Naive thymus-derived CD4-positive, alpha-beta T cell (primary cell): ENCODE measurements at regions of chr6 and their contacts with region 1.

Region 1: GRCh38 chr6:106223300-106223930 is 102.1 kb downstream of the ATG5 start:
- DNase-seq: peak; percentile 18 to 76 (median 65)
- ATAC-seq: peak; percentile 91
- H3K4me3 ChIP-seq: no peak overlapping the region
- H3K4me3 Mint-ChIP-seq: no peak overlapping the region
- H3K27ac ChIP-seq: no peak overlapping the region
- H3K27ac Mint-ChIP-seq: peak overlapping the region in 2 of 9 donors; percentile 5 to 61
- H3K4me1 ChIP-seq: no peaks in the 10 kb centered on the region
- H3K4me1 Mint-ChIP-seq: peaks cover 9 to 25% (median 17%) of the 10 kb centered on the region in 7 donors
- H3K27me3 ChIP-seq: no peaks in the 10 kb centered on the region
- H3K27me3 Mint-ChIP-seq: no peaks in the 10 kb centered on the region

Region 2: DNA sequence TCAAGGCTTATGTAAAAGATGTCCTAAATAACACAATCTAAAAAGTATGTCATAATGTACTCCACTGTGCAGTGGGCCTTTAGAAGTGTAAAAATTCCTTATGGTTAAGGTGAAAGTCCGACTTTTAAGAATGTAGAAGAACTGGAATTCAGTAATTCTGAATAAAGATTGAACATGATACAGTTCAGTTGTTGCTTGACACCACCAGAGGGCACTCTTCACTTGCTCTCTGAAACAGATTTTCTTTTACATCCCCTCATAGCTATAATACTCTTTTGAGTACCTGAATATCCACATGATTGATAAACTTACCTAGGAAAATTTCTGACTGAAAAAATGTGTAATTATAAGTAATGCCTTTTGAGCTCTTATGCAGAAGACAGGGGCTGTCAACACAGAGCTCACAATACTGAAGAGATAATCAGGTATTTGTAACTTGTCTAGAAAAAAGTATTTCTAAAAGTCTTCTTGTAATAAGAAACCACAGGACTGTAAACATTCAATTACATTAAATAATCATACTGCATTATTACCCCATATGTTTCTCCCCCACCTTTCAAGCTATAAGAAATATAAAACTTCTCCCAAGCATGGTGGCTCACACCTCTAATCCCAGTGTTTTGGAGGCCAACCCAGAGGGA is 1135.7 kb before region 1 on chr6:
- CTCF ChIA-PET with region 1: interaction called, 3 read pairs
- POLR2A ChIA-PET with region 1: interaction called, 3 read pairs
- intact Hi-C with region 1: loop called in 1 of 2 experiments (anchors 1 kb)
- DNase-seq: peak in 6 of 9 donors; percentile 11 to 43 (median 32)
- ATAC-seq: peak; percentile 67
- H3K4me3 ChIP-seq: no peak overlapping the region
- H3K4me3 Mint-ChIP-seq: no peak overlapping the region
- H3K27ac ChIP-seq: no peak overlapping the region
- H3K27ac Mint-ChIP-seq: no peak overlapping the region
- H3K4me1 ChIP-seq: no peaks in the 10 kb centered on the region
- H3K4me1 Mint-ChIP-seq: no peaks in the 10 kb centered on the region
- H3K27me3 ChIP-seq: no peaks in the 10 kb centered on the region
- H3K27me3 Mint-ChIP-seq: peaks cover 4 to 10% (median 6%) of the 10 kb centered on the region in 5 donors

Region 3: DNA sequence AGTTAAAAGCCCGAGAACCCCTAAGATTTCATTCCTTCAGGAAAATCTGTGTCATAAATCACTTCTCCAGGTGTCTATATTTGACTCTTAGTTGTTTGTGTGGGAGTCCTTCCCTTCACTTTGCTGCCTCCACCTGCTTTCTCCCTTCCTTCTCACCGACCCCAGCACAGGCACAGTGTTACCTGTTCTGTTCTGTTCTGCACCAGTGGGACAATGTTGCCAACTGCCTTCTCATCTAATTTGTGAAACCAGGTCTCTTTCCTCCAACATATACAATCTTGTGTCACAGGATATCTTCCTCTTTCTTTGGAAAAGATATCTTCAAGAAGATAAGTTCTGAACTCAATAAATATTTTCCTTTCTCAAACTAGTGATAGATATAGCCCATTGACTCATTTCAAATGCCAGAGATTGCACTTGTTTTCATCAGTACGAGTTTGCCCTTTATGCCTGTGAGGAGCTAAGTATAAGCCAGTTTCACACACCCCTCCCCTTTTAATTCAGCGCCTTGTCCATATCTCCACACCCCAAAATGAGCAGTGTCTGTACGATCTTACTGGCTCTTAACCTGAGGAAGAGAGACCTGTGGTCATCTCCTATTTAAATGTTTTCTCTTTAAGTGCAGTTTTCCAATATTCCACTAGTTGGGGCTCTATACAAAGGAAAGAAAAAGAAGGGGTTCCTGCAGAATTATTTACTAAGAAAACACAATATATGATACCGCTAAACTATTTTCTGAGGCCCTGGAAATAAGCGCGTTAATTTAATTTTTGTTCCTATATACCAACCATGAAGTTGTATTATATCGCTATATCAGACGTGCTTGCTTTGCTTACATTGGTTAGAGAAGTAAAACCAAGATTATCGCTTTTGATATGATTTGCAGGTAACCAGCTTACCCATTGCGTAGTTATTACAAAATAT is 738.9 kb before region 1 on chr6:
- CTCF ChIA-PET with region 1: interaction called, 5 read pairs
- POLR2A ChIA-PET with region 1: no interaction called
- intact Hi-C with region 1: loop called in 1 of 2 experiments (anchors 1 kb)
- DNase-seq: peak in 5 of 9 donors; percentile 7 to 36 (median 20)
- ATAC-seq: peak; percentile 59
- H3K4me3 ChIP-seq: no peak overlapping the region
- H3K4me3 Mint-ChIP-seq: no peak overlapping the region
- H3K27ac ChIP-seq: no peak overlapping the region
- H3K27ac Mint-ChIP-seq: peak overlapping the region in 2 of 9 donors; percentile 20 to 52
- H3K4me1 ChIP-seq: peaks cover 0 to 35% of the 10 kb centered on the region in 2 donors
- H3K4me1 Mint-ChIP-seq: peaks cover 0 to 63% (median 0%) of the 10 kb centered on the region in 7 donors
- H3K27me3 ChIP-seq: no peaks in the 10 kb centered on the region
- H3K27me3 Mint-ChIP-seq: peaks cover 11 to 16% (median 13%) of the 10 kb centered on the region in 5 donors

Region 4: DNA sequence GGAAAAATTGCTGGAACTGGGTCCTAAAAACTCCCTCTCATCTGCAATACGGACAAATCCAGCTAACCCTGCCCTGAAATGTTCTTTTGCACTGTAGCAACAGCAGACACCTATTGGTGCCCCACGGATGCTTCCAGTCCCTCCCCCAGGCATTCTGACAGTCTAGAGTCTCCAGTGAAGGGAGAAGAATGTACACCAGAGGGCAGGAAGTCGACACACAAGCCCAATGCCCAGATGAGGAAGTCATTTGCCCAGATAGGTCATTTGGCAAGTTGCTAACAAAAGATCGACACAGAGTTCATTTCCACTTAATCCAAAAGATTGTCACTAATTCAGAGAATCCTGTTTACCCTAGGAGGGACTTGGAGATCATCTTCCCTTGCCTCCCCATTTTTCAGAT is 430.3 kb before region 1 on chr6:
- CTCF ChIA-PET with region 1: interaction called, 3 read pairs
- POLR2A ChIA-PET with region 1: no interaction called
- intact Hi-C with region 1: loop called in 1 of 2 experiments (anchors 1 kb)
- DNase-seq: peak in 3 of 9 donors; percentile 9 to 23 (median 15)
- ATAC-seq: peak; percentile 76
- H3K4me3 ChIP-seq: no peak overlapping the region
- H3K4me3 Mint-ChIP-seq: peak overlapping the region in 1 of 10 donors; percentile 28
- H3K27ac ChIP-seq: no peak overlapping the region
- H3K27ac Mint-ChIP-seq: peak overlapping the region in 1 of 9 donors; percentile 68
- H3K4me1 ChIP-seq: peaks cover 0 to 3% of the 10 kb centered on the region in 2 donors
- H3K4me1 Mint-ChIP-seq: peaks cover 6 to 79% (median 12%) of the 10 kb centered on the region in 7 donors
- H3K27me3 ChIP-seq: no peaks in the 10 kb centered on the region
- H3K27me3 Mint-ChIP-seq: peaks cover 0 to under 1% (median 0%) of the 10 kb centered on the region in 5 donors

Region 5: DNA sequence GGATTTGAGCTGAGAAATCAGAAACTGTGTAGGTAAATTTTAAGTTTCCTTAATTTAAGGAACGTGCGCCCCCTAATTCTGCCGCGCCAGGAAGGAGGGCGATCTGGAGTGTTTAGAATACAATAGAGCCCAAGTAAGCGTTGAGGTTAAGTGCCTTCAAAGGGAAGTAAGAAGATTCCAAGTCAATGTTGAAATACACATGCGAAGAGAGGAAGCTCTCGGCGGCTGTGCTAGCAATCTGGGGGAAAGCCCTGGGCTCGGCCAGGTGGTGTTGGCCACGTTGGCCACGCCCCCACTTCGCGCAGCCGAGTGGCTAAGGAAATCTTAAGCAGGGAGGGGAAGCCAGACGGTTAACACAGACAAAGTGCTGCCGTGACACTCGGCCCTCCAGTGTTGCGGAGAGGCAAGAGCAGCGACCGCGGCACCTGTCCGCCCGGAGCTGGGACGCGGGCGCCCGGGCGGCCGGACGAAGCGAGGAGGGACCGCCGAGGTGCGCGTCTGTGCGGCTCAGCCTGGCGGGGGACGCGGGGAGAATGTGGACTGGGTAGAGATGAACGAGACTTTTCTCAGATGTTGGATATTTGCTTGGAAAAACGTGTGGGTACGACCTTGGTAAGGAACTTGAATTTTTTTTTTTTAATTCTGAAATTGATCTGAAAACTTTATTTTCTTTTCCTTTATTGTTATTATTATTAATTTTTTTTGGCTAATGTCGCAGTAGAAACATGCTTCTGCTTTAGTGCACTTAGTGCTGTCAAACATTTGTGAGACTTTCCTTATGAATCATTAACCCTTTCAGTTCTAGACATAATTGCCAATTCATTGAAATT is 137.2 kb before region 1 on chr6 and contains the start of gene PRDM1:
- CTCF ChIA-PET with region 1: interaction called, 21 read pairs
- POLR2A ChIA-PET with region 1: interaction called, 4 read pairs
- intact Hi-C with region 1: loop called in 1 of 2 experiments (anchors 1 kb)
- DNase-seq: peak; percentile 33 to 79 (median 53)
- ATAC-seq: peak; percentile 92
- H3K4me3 ChIP-seq: peak within 1 kb of the TSS; percentile 63
- H3K4me3 Mint-ChIP-seq: peak within 1 kb of the TSS; percentile 84 to 96 (median 90)
- H3K27ac ChIP-seq: no peak within 1 kb of the TSS
- H3K27ac Mint-ChIP-seq: peak within 1 kb of the TSS; percentile 37 to 92 (median 78)
- H3K4me1 ChIP-seq: peaks cover 50 to 60% of the 10 kb centered on the region in 2 donors
- H3K4me1 Mint-ChIP-seq: peaks cover 50 to 89% (median 76%) of the 10 kb centered on the region in 7 donors
- H3K27me3 ChIP-seq: peaks cover 0 to 14% of the 10 kb centered on the region in 2 donors
- H3K27me3 Mint-ChIP-seq: peaks cover 10 to 47% (median 18%) of the 10 kb centered on the region in 5 donors
- total RNA-seq, gene PRDM1: 2.0 to 64.1 (median 22.6) TPM

Region 6: DNA sequence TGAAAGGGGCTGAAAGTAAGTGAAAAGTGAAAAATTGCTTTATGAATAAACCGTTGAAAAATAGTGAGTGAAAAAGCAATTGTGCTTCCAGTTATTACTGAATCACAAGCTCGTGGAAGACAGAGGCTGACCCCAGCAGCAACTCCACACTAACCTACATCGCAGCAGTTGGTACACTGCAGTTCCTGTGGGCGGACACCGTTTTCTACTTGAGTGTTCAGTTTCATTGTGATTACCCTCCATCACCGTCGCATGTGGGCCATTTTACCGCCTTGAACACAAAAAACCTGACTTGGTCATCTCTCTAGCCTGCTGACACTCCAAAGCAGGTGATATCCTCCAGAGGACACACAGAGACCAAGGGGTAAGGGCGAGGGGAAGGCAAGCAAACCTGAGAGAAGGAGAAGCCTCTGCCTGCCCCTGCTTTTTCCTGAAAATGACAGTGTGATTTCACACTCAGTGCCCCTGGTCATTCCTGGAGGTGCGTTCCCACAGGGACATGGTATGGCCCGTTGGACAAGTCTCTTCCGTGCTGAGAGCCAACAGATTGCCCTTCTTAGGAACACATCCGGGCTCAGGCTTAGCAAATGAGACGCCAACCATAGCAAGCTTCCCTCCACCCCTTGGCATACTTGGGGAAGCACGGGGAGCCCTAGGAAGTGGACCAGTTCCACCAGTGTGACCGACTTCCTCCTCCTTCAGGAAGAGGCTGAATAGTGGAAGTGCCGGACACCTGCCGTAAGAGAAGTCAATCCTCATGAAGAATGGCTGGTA is 108.7 kb before region 1 on chr6:
- CTCF ChIA-PET with region 1: no interaction called
- POLR2A ChIA-PET with region 1: no interaction called
- intact Hi-C with region 1: loop called in 1 of 2 experiments (anchors 1 kb)
- DNase-seq: peak in 1 of 9 donors; percentile 64
- ATAC-seq: no peak
- H3K4me3 ChIP-seq: peak overlapping the region; percentile 28
- H3K4me3 Mint-ChIP-seq: peak overlapping the region in 3 of 10 donors; percentile 11 to 52 (median 15)
- H3K27ac ChIP-seq: no peak overlapping the region
- H3K27ac Mint-ChIP-seq: peak overlapping the region in 2 of 9 donors; percentile 47 to 59
- H3K4me1 ChIP-seq: peaks cover 39 to 78% of the 10 kb centered on the region in 2 donors
- H3K4me1 Mint-ChIP-seq: peaks cover 39 to 84% (median 61%) of the 10 kb centered on the region in 7 donors
- H3K27me3 ChIP-seq: no peaks in the 10 kb centered on the region
- H3K27me3 Mint-ChIP-seq: peaks cover 0 to 5% (median 0%) of the 10 kb centered on the region in 5 donors

Region 7: DNA sequence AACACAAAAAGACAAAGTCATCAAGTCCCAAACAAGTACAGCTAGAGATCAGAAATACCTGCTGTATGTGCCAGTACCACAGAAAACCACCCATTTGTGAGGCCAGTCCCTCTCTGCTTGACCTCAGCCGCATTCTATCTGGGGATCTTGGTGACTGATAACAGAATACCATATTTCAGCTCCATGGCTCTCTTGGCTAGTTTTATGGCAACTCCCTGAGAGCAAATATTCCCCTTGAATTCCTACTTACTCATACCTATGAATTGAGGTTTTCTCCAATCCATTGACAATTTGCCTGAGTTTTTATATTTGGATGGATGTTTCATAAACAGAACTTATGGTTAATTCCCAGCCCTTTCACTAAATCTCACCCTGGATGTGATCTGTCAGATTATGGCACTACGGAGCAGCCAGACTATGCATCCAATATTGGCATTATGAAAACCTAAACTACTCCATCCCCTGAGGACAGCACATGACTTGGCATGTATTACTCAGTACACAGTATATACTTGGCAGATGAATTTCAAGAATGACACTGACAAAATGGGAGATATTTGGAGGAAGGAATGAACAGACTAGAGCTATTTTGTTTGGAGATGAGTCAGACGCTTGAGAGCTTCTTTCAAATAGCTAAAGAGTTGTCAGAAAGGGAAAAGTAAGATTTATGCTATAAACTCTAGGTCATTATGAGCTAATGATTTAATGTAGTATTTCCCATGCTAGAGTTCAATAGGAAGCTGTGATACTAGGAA is 41.6 kb before region 1 on chr6:
- CTCF ChIA-PET with region 1: no interaction called
- POLR2A ChIA-PET with region 1: no interaction called
- intact Hi-C with region 1: loop called in 1 of 2 experiments (anchors 5 kb)
- DNase-seq: no peak
- ATAC-seq: no peak
- H3K4me3 ChIP-seq: no peak overlapping the region
- H3K4me3 Mint-ChIP-seq: no peak overlapping the region
- H3K27ac ChIP-seq: no peak overlapping the region
- H3K27ac Mint-ChIP-seq: peak overlapping the region in 1 of 9 donors; percentile 10
- H3K4me1 ChIP-seq: peaks cover 30 to 33% of the 10 kb centered on the region in 2 donors
- H3K4me1 Mint-ChIP-seq: peaks cover 3 to 47% (median 12%) of the 10 kb centered on the region in 7 donors
- H3K27me3 ChIP-seq: no peaks in the 10 kb centered on the region
- H3K27me3 Mint-ChIP-seq: no peaks in the 10 kb centered on the region